Endothelial cell of umbilical vein (primary cell): ENCODE measurements at regions of chr1 and their contacts with region 1.

Region 1: DNA sequence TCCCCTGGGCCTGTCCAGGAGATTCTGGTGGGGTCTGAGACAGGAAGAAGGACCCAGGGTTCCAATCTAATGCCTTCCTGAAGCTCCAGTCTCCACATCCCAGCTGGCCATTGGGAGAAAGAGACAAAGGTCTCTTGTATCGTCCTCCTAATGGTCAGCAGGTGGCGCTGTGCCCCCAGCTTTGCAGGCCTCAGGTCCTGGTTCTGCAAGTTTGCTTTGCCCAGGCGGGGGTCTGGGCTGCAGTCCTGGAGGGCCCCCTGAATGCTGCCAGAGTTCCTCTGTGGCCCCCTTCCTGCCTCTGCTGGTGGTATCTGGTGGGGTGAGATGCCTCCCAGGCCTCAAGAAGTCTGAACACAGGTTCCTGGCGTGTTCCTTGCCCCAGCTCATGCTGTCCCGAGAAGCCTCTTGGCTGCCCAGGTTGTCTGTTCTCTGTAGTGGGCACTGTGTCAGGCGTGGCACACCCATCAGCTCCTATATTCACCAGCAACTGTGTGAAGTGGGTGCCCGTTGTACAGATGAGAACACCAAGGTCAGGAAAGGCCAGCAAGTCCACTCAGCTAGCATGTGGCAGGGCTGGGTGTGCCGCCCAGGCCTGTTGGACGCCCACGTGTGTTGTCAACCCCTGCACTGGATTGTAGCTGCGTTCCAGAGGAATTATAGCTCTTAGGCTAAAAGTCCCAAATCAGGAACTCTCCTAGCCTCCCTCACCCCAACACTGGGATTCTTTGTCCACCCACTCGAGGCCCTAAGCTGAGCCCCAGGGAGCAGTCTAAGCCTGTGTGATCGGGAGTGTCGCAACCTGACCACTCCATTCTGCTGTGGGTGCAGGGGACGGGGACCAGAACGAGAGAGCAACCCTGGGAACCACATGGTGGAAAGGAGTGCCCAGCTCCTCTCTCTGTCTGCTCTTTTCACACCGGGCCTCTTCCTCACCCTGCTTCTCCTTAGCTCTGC is 33.9 kb upstream of the CSF3R start:
- DNase-seq: peak; percentile 43
- H3K4me3 ChIP-seq: no peak overlapping the region
- H3K27ac ChIP-seq: no peak overlapping the region
- H3K4me1 ChIP-seq: no peaks in the 10 kb centered on the region
- H3K27me3 ChIP-seq: peaks cover 0 to 1% of the 10 kb centered on the region in 2 experiments
- CTCF ChIP-seq: peak; percentile 85 to 90
- POLR2A ChIP-seq: no peak

Region 2: GRCh38 chr1:36497207-36497606 is 19.4 kb before region 1 on chr1:
- CTCF ChIA-PET with region 1: interaction called, 23 read pairs
- POLR2A ChIA-PET with region 1: no interaction called
- dilution Hi-C with region 1: no loop called
- intact Hi-C with region 1: no loop called
- DNase-seq: no peak
- H3K4me3 ChIP-seq: no peak overlapping the region
- H3K27ac ChIP-seq: no peak overlapping the region
- H3K4me1 ChIP-seq: no peaks in the 10 kb centered on the region
- H3K27me3 ChIP-seq: peaks cover 0 to 2% of the 10 kb centered on the region in 2 experiments
- CTCF ChIP-seq: no peak
- POLR2A ChIP-seq: no peak

Region 3: DNA sequence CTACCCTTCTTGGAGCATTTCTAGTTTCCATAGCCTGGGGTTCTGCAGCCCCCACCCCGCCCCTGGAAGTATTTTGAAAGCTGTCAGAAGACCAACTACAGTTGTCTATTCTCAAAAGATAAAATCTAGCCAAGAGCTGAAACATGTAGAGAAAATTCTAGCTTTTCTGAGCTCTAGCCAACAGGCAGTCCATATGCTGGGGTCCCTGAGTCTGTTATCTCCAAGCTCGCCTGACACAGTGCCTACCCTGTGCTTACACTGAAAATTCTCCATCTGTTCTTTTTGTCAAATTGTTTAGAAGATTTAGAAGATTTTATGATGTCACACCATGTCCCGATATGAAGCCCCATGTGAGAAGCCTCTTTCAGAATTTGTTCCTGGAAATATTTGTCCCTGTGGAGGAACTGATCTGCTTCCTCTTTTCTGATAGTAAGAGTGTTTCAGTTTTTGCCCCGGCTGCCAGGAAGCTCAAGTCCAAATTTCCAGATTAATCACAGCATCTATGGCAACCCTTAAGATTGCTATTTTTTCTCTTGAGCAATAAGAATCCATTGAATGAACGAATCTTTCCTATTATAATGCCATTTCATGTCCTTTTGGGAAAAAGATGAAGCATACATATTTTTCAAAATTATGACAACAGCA is 10.3 kb before region 1 on chr1:
- CTCF ChIA-PET with region 1: interaction called, 27 read pairs
- POLR2A ChIA-PET with region 1: no interaction called
- dilution Hi-C with region 1: no loop called
- intact Hi-C with region 1: no loop called
- DNase-seq: no peak
- H3K4me3 ChIP-seq: no peak overlapping the region
- H3K27ac ChIP-seq: no peak overlapping the region
- H3K4me1 ChIP-seq: no peaks in the 10 kb centered on the region
- H3K27me3 ChIP-seq: peaks cover 4 to 5% of the 10 kb centered on the region in 2 experiments
- CTCF ChIP-seq: no peak
- POLR2A ChIP-seq: no peak

Region 4: GRCh38 chr1:36534711-36535412 is 18.2 kb after region 1 on chr1:
- CTCF ChIA-PET with region 1: interaction called, 12 read pairs
- POLR2A ChIA-PET with region 1: no interaction called
- dilution Hi-C with region 1: no loop called
- intact Hi-C with region 1: no loop called
- DNase-seq: no peak
- H3K4me3 ChIP-seq: no peak overlapping the region
- H3K27ac ChIP-seq: no peak overlapping the region
- H3K4me1 ChIP-seq: no peaks in the 10 kb centered on the region
- H3K27me3 ChIP-seq: peaks cover 0 to 4% of the 10 kb centered on the region in 2 experiments
- CTCF ChIP-seq: no peak
- POLR2A ChIP-seq: no peak

Region 5: GRCh38 chr1:36542962-36543515 is 26.4 kb after region 1 on chr1:
- CTCF ChIA-PET with region 1: interaction called, 22 read pairs
- POLR2A ChIA-PET with region 1: no interaction called
- dilution Hi-C with region 1: no loop called
- intact Hi-C with region 1: no loop called
- DNase-seq: no peak
- H3K4me3 ChIP-seq: no peak overlapping the region
- H3K27ac ChIP-seq: no peak overlapping the region
- H3K4me1 ChIP-seq: no peaks in the 10 kb centered on the region
- H3K27me3 ChIP-seq: peaks cover 0 to 4% of the 10 kb centered on the region in 2 experiments
- CTCF ChIP-seq: peak in 1 of 2 donors; percentile 28
- POLR2A ChIP-seq: no peak

Region 6: GRCh38 chr1:36947384-36947783 is 430.7 kb after region 1 on chr1:
- CTCF ChIA-PET with region 1: no interaction called
- POLR2A ChIA-PET with region 1: no interaction called
- dilution Hi-C with region 1: no loop called
- intact Hi-C with region 1: no loop called
- DNase-seq: no peak
- H3K4me3 ChIP-seq: no peak overlapping the region
- H3K27ac ChIP-seq: no peak overlapping the region
- H3K4me1 ChIP-seq: no peaks in the 10 kb centered on the region
- H3K27me3 ChIP-seq: no peaks in the 10 kb centered on the region
- CTCF ChIP-seq: no peak
- POLR2A ChIP-seq: no peak

Region 7: DNA sequence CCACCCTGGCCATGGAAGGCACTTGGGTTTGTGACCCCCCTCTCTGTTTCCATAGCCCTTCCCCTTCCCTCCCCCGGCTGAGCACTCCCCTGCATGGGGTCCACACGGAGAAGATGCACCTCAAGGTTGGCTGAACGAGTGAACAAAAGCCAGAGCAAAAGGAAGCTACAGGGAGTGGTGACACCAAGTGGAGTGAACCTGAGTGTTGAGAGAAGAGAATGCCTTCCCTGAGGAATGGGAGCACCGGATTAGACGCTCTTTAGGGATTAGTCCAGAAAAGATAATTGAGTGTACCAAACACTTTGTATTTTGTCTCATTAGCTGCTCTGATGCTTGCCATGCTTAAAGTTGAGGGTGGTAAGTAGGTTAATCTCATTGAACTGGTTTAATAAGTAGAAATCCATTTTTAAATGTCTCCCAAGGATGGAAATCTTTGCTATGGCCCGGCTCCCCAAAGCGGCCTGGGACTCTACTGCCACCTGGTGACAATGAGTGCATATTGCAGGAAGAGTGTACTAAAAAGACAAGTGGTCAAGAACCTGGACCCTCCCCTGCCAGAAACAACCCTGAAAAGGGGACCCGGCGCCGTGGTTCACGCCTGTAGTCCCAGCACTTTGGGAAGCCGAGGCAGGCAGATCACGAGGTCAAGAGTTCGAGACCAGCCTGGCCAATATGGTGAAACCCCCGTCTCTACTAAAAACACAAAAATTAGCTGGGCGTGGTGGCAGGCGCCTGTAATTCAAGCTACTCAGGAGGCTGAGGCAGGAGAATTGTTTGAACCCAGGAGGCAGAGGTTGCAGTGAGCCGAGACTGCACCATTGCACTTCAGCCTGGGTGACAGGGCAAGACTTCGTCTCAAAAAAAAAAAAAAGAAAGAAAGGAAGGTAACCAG is 807.1 kb after region 1 on chr1:
- CTCF ChIA-PET with region 1: interaction called, 7 read pairs
- POLR2A ChIA-PET with region 1: no interaction called
- dilution Hi-C with region 1: no loop called
- intact Hi-C with region 1: loop called (anchors 1 kb)
- DNase-seq: peak; percentile 32
- H3K4me3 ChIP-seq: no peak overlapping the region
- H3K27ac ChIP-seq: no peak overlapping the region
- H3K4me1 ChIP-seq: no peaks in the 10 kb centered on the region
- H3K27me3 ChIP-seq: peaks cover 0 to 3% of the 10 kb centered on the region in 2 experiments
- CTCF ChIP-seq: peak; percentile 67 to 75
- POLR2A ChIP-seq: no peak

Region 8: GRCh38 chr1:37434292-37434907 is 917.8 kb after region 1 on chr1:
- CTCF ChIA-PET with region 1: interaction called, 49 read pairs
- POLR2A ChIA-PET with region 1: no interaction called
- dilution Hi-C with region 1: no loop called
- intact Hi-C with region 1: no loop called
- DNase-seq: peak; percentile 48
- H3K4me3 ChIP-seq: no peak overlapping the region
- H3K27ac ChIP-seq: no peak overlapping the region
- H3K4me1 ChIP-seq: no peaks in the 10 kb centered on the region
- H3K27me3 ChIP-seq: no peaks in the 10 kb centered on the region
- CTCF ChIP-seq: peak; percentile 93 to 99
- POLR2A ChIP-seq: no peak